Naive thymus-derived CD4-positive, alpha-beta T cell (primary cell): ENCODE measurements at regions of chr2 and their contacts with region 1.

Region 1: DNA sequence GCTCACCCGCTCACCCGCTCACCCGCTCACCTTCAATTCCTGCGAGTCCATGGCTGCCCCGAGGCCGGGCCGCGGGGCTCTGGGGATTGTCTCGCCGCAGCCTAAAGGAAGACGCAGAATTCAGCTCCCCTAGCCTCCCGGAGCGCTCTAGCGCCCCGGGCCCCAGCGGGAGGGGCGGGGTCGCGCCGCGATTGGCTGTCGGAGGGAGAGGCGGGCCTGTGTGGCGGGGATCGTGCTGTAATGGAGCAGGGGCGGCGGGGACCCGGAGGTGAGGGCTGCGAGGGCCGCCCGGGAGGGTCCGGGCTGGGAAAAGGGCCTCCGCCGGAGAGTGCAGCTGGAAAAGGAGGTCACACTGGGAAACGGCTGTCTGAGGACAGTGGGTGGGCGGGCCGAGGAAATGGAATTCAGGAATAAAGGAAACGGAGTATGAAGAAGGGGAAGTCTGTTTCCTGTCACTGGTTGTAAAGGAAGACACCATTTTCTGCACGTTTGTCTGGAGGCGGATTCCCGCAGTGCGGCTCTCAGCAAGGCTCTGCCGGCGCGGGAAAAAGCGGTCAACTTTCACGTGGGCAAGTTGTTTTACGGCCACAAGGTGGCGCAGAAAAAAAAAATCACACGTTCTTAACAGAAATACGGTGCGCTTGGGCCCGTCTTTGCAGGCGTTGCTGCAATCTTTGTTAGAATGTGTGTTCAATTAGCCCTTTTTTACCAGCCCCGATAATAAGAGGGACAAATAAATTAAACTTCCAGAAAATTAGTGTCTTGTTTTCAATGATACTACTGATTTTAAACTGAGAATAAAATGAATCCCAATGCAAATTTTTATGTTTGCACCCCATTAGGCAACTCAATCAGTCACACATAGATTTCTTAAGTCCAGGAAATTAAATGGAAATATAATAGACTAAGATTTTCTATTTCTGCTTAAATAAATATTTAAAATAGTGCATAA is at the start of gene TTC21B:
- DNase-seq: peak; percentile 92 to 97 (median 95)
- ATAC-seq: peak; percentile 98
- H3K4me3 ChIP-seq: peak within 1 kb of the TSS; percentile 91
- H3K4me3 Mint-ChIP-seq: peak within 1 kb of the TSS in 3 of 10 donors; percentile 59 to 63 (median 61)
- H3K27ac ChIP-seq: peak within 1 kb of the TSS; percentile 66
- H3K27ac Mint-ChIP-seq: peak within 1 kb of the TSS in 5 of 9 donors; percentile 33 to 71 (median 70)
- H3K4me1 ChIP-seq: peaks cover 22 to 25% of the 10 kb centered on the region in 2 donors
- H3K4me1 Mint-ChIP-seq: peaks cover 7 to 30% (median 12%) of the 10 kb centered on the region in 7 donors
- H3K27me3 ChIP-seq: no peaks in the 10 kb centered on the region
- H3K27me3 Mint-ChIP-seq: no peaks in the 10 kb centered on the region
- total RNA-seq, gene TTC21B: 23.0 to 38.9 (median 33.0) TPM

Region 2: GRCh38 chr2:165293440-165294353 is 660.2 kb before region 1 on chr2:
- CTCF ChIA-PET with region 1: no interaction called
- POLR2A ChIA-PET with region 1: no interaction called
- intact Hi-C with region 1: loop called (anchors 2 to 5 kb)
- DNase-seq: peak in 7 of 9 donors; percentile 78 to 89 (median 86)
- ATAC-seq: peak; percentile 100
- H3K4me3 ChIP-seq: no peak overlapping the region
- H3K4me3 Mint-ChIP-seq: peak overlapping the region in 6 of 10 donors; percentile 6 to 50 (median 24)
- H3K27ac ChIP-seq: no peak overlapping the region
- H3K27ac Mint-ChIP-seq: peak overlapping the region in 2 of 9 donors; percentile 12 to 50
- H3K4me1 ChIP-seq: no peaks in the 10 kb centered on the region
- H3K4me1 Mint-ChIP-seq: peaks cover 0 to 13% (median 6%) of the 10 kb centered on the region in 7 donors
- H3K27me3 ChIP-seq: no peaks in the 10 kb centered on the region
- H3K27me3 Mint-ChIP-seq: peaks cover 6 to 18% (median 8%) of the 10 kb centered on the region in 5 donors

Region 3: DNA sequence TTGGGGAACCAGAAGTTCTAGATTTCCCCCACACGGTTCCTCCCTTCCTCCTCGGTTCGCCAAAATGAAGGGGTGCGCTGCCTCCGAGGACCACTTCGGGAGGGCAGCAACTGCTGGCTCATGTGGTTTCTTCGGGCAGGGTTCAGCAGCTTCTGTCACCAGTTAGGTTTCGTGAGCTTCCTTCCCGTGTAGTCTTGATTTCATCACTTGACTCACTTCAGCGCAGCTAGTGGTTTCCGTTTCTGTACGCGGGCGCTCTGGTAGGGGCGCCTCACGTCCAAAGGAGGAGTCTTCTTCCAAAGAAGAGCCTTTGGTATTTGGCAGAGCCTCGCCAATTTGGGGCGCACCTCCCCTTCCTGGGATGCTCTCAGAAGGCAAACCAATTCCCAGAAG is 159.4 kb before region 1 on chr2:
- CTCF ChIA-PET with region 1: no interaction called
- POLR2A ChIA-PET with region 1: no interaction called
- intact Hi-C with region 1: loop called in 1 of 2 experiments (anchors 2 kb)
- DNase-seq: peak in 6 of 9 donors; percentile 25 to 65 (median 32)
- ATAC-seq: peak; percentile 91
- H3K4me3 ChIP-seq: peak overlapping the region; percentile 58
- H3K4me3 Mint-ChIP-seq: peak overlapping the region; percentile 85 to 97 (median 88)
- H3K27ac ChIP-seq: no peak overlapping the region
- H3K27ac Mint-ChIP-seq: peak overlapping the region in 5 of 9 donors; percentile 21 to 97 (median 44)
- H3K4me1 ChIP-seq: peaks cover 0 to 6% of the 10 kb centered on the region in 2 donors
- H3K4me1 Mint-ChIP-seq: peaks cover 14 to 42% (median 20%) of the 10 kb centered on the region in 7 donors
- H3K27me3 ChIP-seq: peaks cover 0 to 7% of the 10 kb centered on the region in 2 donors
- H3K27me3 Mint-ChIP-seq: peaks cover 12 to 46% (median 37%) of the 10 kb centered on the region in 5 donors

Region 4: DNA sequence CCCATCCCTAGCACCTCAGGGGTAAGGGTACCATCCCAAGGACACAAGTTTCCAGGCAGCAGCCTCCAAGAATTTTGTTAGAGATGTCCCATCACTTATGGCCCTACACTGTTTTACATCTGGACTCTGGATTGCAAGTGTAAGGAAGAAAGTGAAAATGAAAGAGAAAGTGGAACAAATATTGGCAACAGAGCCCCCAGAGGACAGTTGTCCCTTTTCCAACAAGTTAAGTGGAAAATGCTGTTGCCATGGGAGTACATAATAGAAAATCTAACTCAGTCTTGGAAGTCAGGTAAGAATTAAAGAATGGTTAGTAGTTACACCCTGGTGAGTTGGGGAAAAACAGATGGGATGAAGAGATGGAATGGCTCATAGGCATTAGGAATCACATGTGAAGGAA is 51.0 kb before region 1 on chr2:
- CTCF ChIA-PET with region 1: no interaction called
- POLR2A ChIA-PET with region 1: no interaction called
- intact Hi-C with region 1: loop called in 1 of 2 experiments (anchors 1 kb)
- DNase-seq: peak in 1 of 9 donors; percentile 5
- ATAC-seq: no peak
- H3K4me3 ChIP-seq: no peak overlapping the region
- H3K4me3 Mint-ChIP-seq: peak overlapping the region in 2 of 10 donors; percentile 7 to 76
- H3K27ac ChIP-seq: no peak overlapping the region
- H3K27ac Mint-ChIP-seq: peak overlapping the region in 4 of 9 donors; percentile 33 to 79 (median 61)
- H3K4me1 ChIP-seq: no peaks in the 10 kb centered on the region
- H3K4me1 Mint-ChIP-seq: peaks cover 6 to 24% (median 10%) of the 10 kb centered on the region in 7 donors
- H3K27me3 ChIP-seq: no peaks in the 10 kb centered on the region
- H3K27me3 Mint-ChIP-seq: no peaks in the 10 kb centered on the region

Region 5: GRCh38 chr2:166017208-166017607 is 63.3 kb after region 1 on chr2:
- CTCF ChIA-PET with region 1: no interaction called
- POLR2A ChIA-PET with region 1: no interaction called
- intact Hi-C with region 1: loop called in 1 of 2 experiments (anchors 5 kb)
- DNase-seq: no peak
- ATAC-seq: no peak
- H3K4me3 ChIP-seq: no peak overlapping the region
- H3K4me3 Mint-ChIP-seq: no peak overlapping the region
- H3K27ac ChIP-seq: no peak overlapping the region
- H3K27ac Mint-ChIP-seq: no peak overlapping the region
- H3K4me1 ChIP-seq: no peaks in the 10 kb centered on the region
- H3K4me1 Mint-ChIP-seq: no peaks in the 10 kb centered on the region
- H3K27me3 ChIP-seq: no peaks in the 10 kb centered on the region
- H3K27me3 Mint-ChIP-seq: peaks cover 0 to 15% (median 9%) of the 10 kb centered on the region in 5 donors

Region 6: DNA sequence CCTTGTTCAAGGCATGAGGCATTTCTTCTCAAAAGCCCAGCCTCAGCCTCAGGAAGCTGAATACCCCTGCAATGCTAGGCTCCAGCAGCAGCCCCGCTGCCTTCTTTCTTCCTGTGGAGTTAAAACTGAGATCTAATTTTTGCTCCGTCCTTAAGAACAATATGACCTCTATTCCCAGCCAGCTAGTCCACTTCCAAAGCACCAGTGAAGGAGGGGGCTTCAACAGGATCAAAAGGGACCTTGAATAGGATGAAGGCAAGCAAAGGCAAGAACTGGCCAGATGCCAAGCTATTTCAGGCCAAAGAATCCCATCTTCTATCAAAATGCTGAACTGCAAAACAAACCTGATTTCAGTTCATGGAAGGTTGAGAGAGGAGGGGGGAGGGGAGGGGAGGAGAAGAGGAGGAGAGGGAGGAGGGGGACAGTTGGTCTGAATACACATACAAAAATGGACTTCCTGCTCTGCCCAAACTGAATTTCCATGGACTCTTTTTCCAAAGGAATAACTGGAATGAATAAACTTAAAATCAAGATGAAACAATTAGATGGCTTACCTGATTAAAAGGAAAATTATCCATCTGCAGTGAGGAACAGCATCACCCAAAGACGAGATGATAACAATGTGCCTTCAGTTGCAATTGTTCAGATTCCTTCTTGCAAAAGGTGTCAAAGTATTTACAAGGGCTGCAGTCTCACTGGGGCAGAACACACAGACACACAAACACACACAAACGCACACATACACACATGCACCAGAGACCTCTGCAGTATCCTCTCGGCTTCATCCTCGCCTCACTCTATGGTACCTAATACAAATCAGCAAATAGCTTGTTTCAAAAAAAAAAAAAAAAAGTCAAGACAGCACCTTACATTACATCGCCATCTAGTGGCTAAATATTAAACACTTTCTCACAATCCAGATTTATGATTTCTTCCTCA is 173.6 kb after region 1 on chr2 and contains the start of gene SCN1A:
- CTCF ChIA-PET with region 1: interaction called, 7 read pairs
- POLR2A ChIA-PET with region 1: interaction called, 4 read pairs
- intact Hi-C with region 1: loop called (anchors 1 kb)
- DNase-seq: peak in 6 of 9 donors; percentile 4 to 53 (median 29)
- ATAC-seq: peak; percentile 63
- H3K4me3 ChIP-seq: no peak within 1 kb of the TSS
- H3K4me3 Mint-ChIP-seq: peak within 1 kb of the TSS in 1 of 10 donors; percentile 51
- H3K27ac ChIP-seq: no peak within 1 kb of the TSS
- H3K27ac Mint-ChIP-seq: no peak within 1 kb of the TSS
- H3K4me1 ChIP-seq: no peaks in the 10 kb centered on the region
- H3K4me1 Mint-ChIP-seq: peaks cover 0 to 5% (median 4%) of the 10 kb centered on the region in 7 donors
- H3K27me3 ChIP-seq: no peaks in the 10 kb centered on the region
- H3K27me3 Mint-ChIP-seq: peaks cover 10 to 29% (median 25%) of the 10 kb centered on the region in 5 donors
- total RNA-seq, gene SCN1A: not detected